Mammary epithelial cell (primary cell): ENCODE measurements at regions of chr9 and their contacts with region 1.

Region 1: GRCh38 chr9:74773886-74774479 is 113.7 kb downstream of the TRPM6 start:
- DNase-seq: peak; percentile 52
- H3K4me3 ChIP-seq: no peak overlapping the region
- H3K27ac ChIP-seq: no peak overlapping the region
- H3K4me1 ChIP-seq: no peaks in the 10 kb centered on the region
- H3K27me3 ChIP-seq: no peaks in the 10 kb centered on the region
- CTCF ChIP-seq: peak; percentile 87 to 94

Region 2: DNA sequence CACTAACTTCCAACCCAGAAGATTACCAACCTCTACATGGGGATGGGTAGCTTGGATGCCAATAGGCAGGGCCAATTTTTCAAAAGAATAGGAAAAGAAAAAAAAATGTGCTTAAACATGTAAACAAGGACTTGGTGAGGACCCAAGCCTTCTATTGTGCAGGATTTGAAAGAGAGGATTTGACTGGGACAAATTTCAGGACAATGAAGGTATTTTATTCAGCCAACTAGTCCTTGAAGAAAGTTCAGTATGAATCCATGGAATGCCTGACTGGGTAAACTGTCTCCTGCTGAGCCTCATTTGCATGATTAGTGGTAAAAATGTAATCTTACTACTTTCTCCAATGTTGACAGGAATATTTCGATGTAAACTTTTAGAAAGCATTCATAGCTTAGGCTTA is 469.4 kb before region 1 on chr9:
- CTCF ChIA-PET with region 1: no interaction called
- dilution Hi-C with region 1: no loop called
- in situ Hi-C with region 1: no loop called
- intact Hi-C with region 1: no loop called
- DNase-seq: no peak
- H3K4me3 ChIP-seq: no peak overlapping the region
- H3K27ac ChIP-seq: no peak overlapping the region
- H3K4me1 ChIP-seq: no peaks in the 10 kb centered on the region
- H3K27me3 ChIP-seq: no peaks in the 10 kb centered on the region
- CTCF ChIP-seq: no peak

Region 3: DNA sequence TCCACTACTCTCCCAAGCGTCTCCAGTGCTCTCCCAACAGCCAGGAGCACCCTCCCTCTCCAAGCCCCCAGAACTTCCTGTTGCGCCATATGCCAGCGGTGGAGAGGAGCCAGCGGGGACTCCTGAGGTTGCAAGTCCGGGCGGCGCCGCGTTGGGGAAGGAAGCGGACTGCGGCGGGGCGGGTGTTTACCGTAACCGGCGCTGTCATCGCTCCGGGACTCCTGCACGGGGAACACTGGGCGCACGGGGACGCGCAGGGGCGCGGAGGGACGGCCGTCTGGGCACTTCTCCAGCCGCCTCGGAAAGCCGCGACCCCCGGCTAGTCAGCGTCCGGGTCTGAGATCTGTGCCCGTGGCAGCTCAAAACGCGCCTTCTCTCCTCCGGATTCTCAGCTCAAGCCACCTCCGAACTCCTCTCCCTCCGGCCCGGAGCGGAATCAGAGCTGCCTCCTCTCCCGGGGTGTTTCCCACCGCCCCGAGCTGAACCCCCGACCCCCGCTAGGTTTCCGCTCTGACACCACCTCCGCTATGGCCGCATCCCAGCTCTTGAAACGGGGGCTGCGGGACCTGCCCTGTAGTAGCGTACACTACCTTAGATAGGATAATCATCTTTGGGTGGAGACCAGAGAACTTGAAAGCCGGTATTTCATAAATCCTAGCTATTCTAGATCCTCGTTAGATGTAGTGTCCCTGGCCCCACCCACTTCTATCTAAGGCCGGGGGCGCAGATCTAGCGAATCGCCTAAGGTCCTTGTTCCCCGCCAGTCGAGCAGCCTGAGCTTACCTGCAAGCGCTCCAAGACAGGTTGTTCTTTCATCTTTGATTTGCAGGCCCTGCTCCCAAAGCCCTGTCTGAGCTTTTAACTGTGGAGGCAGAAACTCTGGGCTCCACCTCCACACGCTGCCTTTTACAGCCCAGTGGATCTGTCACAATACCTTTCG is 113.3 kb after region 1 on chr9 and contains the start of gene TRPM6:
- CTCF ChIA-PET with region 1: no interaction called
- dilution Hi-C with region 1: no loop called
- in situ Hi-C with region 1: no loop called
- intact Hi-C with region 1: loop called (anchors 5 kb)
- DNase-seq: peak; percentile 78
- H3K4me3 ChIP-seq: peak within 1 kb of the TSS; percentile 60 to 85 (median 63)
- H3K27ac ChIP-seq: no peak within 1 kb of the TSS
- H3K4me1 ChIP-seq: peaks cover 3% of the 10 kb centered on the region
- H3K27me3 ChIP-seq: no peaks in the 10 kb centered on the region
- CTCF ChIP-seq: no peak
- total RNA-seq, gene TRPM6: 1.5 to 3.0 TPM

Region 4: GRCh38 chr9:75001719-75002422 is 227.9 kb after region 1 on chr9:
- CTCF ChIA-PET with region 1: no interaction called
- dilution Hi-C with region 1: no loop called
- in situ Hi-C with region 1: loop called (anchors 5 kb)
- intact Hi-C with region 1: loop called (anchors 1 kb)
- DNase-seq: peak; percentile 58
- H3K4me3 ChIP-seq: no peak overlapping the region
- H3K27ac ChIP-seq: no peak overlapping the region
- H3K4me1 ChIP-seq: no peaks in the 10 kb centered on the region
- H3K27me3 ChIP-seq: no peaks in the 10 kb centered on the region
- CTCF ChIP-seq: peak; percentile 67 to 68

Region 5: GRCh38 chr9:75185585-75186170 is 411.7 kb after region 1 on chr9:
- CTCF ChIA-PET with region 1: no interaction called
- dilution Hi-C with region 1: no loop called
- in situ Hi-C with region 1: no loop called
- intact Hi-C with region 1: loop called (anchors 5 kb)
- DNase-seq: no peak
- H3K4me3 ChIP-seq: no peak overlapping the region
- H3K27ac ChIP-seq: no peak overlapping the region
- H3K4me1 ChIP-seq: peaks cover 3% of the 10 kb centered on the region
- H3K27me3 ChIP-seq: no peaks in the 10 kb centered on the region
- CTCF ChIP-seq: peak; percentile 60 to 71

Region 6: DNA sequence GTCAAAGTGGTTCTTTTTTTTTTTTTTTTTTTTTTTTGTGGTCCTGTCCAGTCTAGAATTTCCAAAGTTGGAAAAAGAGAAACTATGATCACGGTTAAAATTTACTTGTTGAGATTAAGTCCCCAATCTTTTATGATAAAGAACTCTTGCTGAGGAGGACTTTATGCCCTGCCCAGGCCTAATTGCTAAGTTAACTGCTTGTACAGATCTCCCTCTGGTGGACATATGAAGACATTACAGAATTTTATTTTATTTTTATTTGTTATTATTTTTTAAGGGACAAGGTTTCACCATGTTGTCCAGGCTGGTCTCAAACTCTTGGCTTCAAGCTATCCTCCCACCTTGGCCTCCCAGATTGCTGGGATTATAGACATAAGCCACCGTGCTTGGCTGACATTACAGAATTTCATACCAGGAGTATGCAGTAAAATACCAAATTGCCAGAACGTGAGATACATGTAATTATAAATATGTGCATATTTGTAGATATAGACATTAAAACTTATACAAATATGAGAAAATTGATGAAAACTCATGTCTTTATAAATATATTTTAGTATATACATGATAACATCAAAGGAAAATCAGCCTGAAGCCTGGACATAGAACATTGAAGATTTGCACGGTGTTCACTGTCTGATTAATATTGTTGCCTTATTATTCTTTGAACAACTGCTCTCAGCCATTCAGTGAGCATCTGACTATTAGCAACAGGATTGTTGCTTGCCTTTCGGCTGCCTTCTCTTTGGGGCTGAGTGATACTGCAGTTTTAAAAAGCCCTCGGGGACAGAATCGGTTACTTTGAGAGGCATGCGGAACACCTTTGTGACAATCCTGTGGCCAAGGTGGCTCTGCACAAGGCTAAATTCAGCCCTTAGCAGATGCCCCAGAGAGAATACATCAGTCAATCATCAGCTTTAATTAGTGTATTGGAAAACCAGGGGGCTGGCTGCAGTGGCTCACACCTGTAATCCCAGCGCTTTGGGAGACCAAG is 1529.3 kb after region 1 on chr9:
- CTCF ChIA-PET with region 1: interaction called, 3 read pairs
- dilution Hi-C with region 1: no loop called
- in situ Hi-C with region 1: no loop called
- intact Hi-C with region 1: loop called (anchors 5 kb)
- DNase-seq: peak; percentile 26
- H3K4me3 ChIP-seq: no peak overlapping the region
- H3K27ac ChIP-seq: no peak overlapping the region
- H3K4me1 ChIP-seq: no peaks in the 10 kb centered on the region
- H3K27me3 ChIP-seq: no peaks in the 10 kb centered on the region
- CTCF ChIP-seq: peak; percentile 42 to 65